Activated T-helper 2 cell treated with anti-CD3 and anti-CD28 coated beads, Interferon-gamma antibody, Interleukin-2, Interleukin-4, amounts not matched to agents 10 μg/mL and 5 μg/mL and 100 μg/mL, durations not matched to agents 14 hours and 24 hours and 36 hours (primary cell): ENCODE measurements at regions of chr3 and their contacts with region 1.

Region 1: GRCh38 chr3:192917404-192918274 is at the start of gene MB21D2:
- DNase-seq: peak; percentile 54
- H3K4me3 Mint-ChIP-seq: peak within 1 kb of the TSS; percentile 97
- H3K27ac Mint-ChIP-seq: peak within 1 kb of the TSS; percentile 90
- H3K4me1 Mint-ChIP-seq: peaks cover 35% of the 10 kb centered on the region
- H3K27me3 Mint-ChIP-seq: peaks cover 61% of the 10 kb centered on the region
- total RNA-seq, gene MB21D2: 17.7 TPM in 2 replicates

Region 2: GRCh38 chr3:192494174-192494573 is 423.5 kb before region 1 on chr3:
- intact Hi-C with region 1: no loop called
- DNase-seq: no peak
- H3K4me3 Mint-ChIP-seq: no peak overlapping the region
- H3K27ac Mint-ChIP-seq: no peak overlapping the region
- H3K4me1 Mint-ChIP-seq: no peaks in the 10 kb centered on the region
- H3K27me3 Mint-ChIP-seq: no peaks in the 10 kb centered on the region

Region 3: GRCh38 chr3:192831111-192831644 is 86.5 kb before region 1 on chr3:
- intact Hi-C with region 1: loop called (anchors 5 kb)
- DNase-seq: no peak
- H3K4me3 Mint-ChIP-seq: no peak overlapping the region
- H3K27ac Mint-ChIP-seq: peak overlapping the region; percentile 77
- H3K4me1 Mint-ChIP-seq: peaks cover 38% of the 10 kb centered on the region
- H3K27me3 Mint-ChIP-seq: no peaks in the 10 kb centered on the region

Region 4: DNA sequence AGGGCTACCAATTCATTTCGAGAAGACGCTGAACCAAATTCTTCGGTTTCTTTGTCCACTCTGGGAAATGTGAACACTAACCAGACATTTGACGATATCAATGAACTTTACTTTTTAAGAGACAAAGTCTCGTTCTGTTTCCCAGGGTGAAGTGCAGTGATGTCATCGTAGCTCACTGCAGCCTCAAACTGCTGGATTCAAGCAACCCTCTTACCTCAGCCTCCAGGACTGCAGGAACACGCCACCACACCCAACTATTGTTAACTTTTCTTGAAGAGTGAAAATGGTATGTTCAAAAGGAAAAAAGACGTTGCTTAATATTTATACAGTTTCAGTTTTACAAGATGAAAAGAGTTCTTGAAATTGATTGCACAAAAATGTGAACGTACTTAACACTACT is 30.6 kb before region 1 on chr3:
- intact Hi-C with region 1: loop called (anchors 1 kb)
- DNase-seq: no peak
- H3K4me3 Mint-ChIP-seq: peak overlapping the region; percentile 17
- H3K27ac Mint-ChIP-seq: peak overlapping the region; percentile 75
- H3K4me1 Mint-ChIP-seq: peaks cover 55% of the 10 kb centered on the region
- H3K27me3 Mint-ChIP-seq: peaks cover 2% of the 10 kb centered on the region

Region 5: GRCh38 chr3:192899540-192899982 is 18.1 kb before region 1 on chr3:
- intact Hi-C with region 1: loop called (anchors 1 kb)
- DNase-seq: no peak
- H3K4me3 Mint-ChIP-seq: no peak overlapping the region
- H3K27ac Mint-ChIP-seq: peak overlapping the region; percentile 79
- H3K4me1 Mint-ChIP-seq: peaks cover 55% of the 10 kb centered on the region
- H3K27me3 Mint-ChIP-seq: peaks cover 12% of the 10 kb centered on the region

Region 6: GRCh38 chr3:192933779-192934460 is 16.3 kb after region 1 on chr3:
- intact Hi-C with region 1: loop called (anchors 1 kb)
- DNase-seq: no peak
- H3K4me3 Mint-ChIP-seq: no peak overlapping the region
- H3K27ac Mint-ChIP-seq: peak overlapping the region; percentile 91
- H3K4me1 Mint-ChIP-seq: peaks cover 14% of the 10 kb centered on the region
- H3K27me3 Mint-ChIP-seq: peaks cover 2% of the 10 kb centered on the region

Region 7: GRCh38 chr3:192993411-192993810 is 75.8 kb after region 1 on chr3:
- intact Hi-C with region 1: no loop called
- DNase-seq: no peak
- H3K4me3 Mint-ChIP-seq: no peak overlapping the region
- H3K27ac Mint-ChIP-seq: no peak overlapping the region
- H3K4me1 Mint-ChIP-seq: peaks cover 10% of the 10 kb centered on the region
- H3K27me3 Mint-ChIP-seq: peaks cover 5% of the 10 kb centered on the region

Region 8: GRCh38 chr3:193040836-193041672 is 123.4 kb after region 1 on chr3:
- intact Hi-C with region 1: loop called (anchors 5 kb)
- DNase-seq: no peak
- H3K4me3 Mint-ChIP-seq: no peak overlapping the region
- H3K27ac Mint-ChIP-seq: no peak overlapping the region
- H3K4me1 Mint-ChIP-seq: peaks cover 3% of the 10 kb centered on the region
- H3K27me3 Mint-ChIP-seq: peaks cover 10% of the 10 kb centered on the region